ENCODE measurements at regions of chr1 and their contacts with region 1.

Region 1: GRCh38 chr1:112466078-112466660 is 42.6 kb upstream of the WNT2B start:
- DNase-seq: peak; percentile 98
- H3K4me3 ChIP-seq: peak overlapping the region; percentile 14
- H3K27ac ChIP-seq: peak overlapping the region; percentile 53
- H3K4me1 ChIP-seq: no peaks in the 10 kb centered on the region
- H3K27me3 ChIP-seq: no peaks in the 10 kb centered on the region
- CTCF ChIP-seq: peak; percentile 80

Region 2: GRCh38 chr1:112390775-112391602 is 75.2 kb before region 1 on chr1:
- intact Hi-C with region 1: loop called (anchors 2 kb)
- DNase-seq: peak; percentile 96
- H3K4me3 ChIP-seq: peak overlapping the region; percentile 37
- H3K27ac ChIP-seq: peak overlapping the region; percentile 87
- H3K4me1 ChIP-seq: peaks cover 10% of the 10 kb centered on the region
- H3K27me3 ChIP-seq: no peaks in the 10 kb centered on the region
- CTCF ChIP-seq: peak; percentile 92

Region 3: DNA sequence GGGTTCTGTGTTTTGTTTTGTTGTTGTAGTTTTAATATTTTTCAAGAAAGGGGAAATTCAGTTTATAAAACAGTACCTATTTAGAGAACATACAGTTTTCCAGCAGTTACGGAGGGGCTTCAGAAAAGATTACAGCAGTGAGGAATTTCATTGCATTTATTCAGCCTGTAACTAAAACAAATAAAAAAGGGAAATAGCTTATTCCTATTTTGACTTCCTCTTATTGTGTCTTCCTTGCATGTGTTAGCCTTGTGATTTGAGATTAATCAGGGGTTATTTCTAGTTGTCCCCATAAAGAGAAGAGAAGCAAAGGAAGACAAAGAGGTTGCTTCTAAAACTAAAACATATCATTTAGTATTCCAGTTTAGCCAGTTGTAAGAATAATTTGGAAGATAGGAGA is 35.1 kb before region 1 on chr1:
- intact Hi-C with region 1: no loop called
- DNase-seq: no peak
- H3K4me3 ChIP-seq: no peak overlapping the region
- H3K27ac ChIP-seq: no peak overlapping the region
- H3K4me1 ChIP-seq: no peaks in the 10 kb centered on the region
- H3K27me3 ChIP-seq: no peaks in the 10 kb centered on the region
- CTCF ChIP-seq: no peak

Measured in colonic mucosa (tissue), 4 donors.